PC-9 (cell line): ENCODE measurements at regions of chr6 and their contacts with region 1.

Region 1: GRCh38 chr6:79544939-79545450 is 7.8 kb upstream of the LCA5 start:
- DNase-seq: peak; percentile 79 to 94
- H3K4me3 ChIP-seq: no peak overlapping the region
- H3K27ac ChIP-seq: peak overlapping the region; percentile 64
- H3K4me1 ChIP-seq: peaks cover 19% of the 10 kb centered on the region
- H3K27me3 ChIP-seq: no peaks in the 10 kb centered on the region
- CTCF ChIP-seq: no peak; the same call in 1 of the 2 replicates

Region 2: GRCh38 chr6:79557673-79558467 is 12.9 kb after region 1 on chr6:
- CTCF ChIA-PET with region 1: no interaction called
- POLR2A ChIA-PET with region 1: no interaction called
- intact Hi-C with region 1: no loop called
- DNase-seq: no peak
- H3K4me3 ChIP-seq: no peak overlapping the region
- H3K27ac ChIP-seq: no peak overlapping the region
- H3K4me1 ChIP-seq: no peaks in the 10 kb centered on the region
- H3K27me3 ChIP-seq: no peaks in the 10 kb centered on the region
- CTCF ChIP-seq: no peak

Region 3: GRCh38 chr6:79586548-79586947 is 41.6 kb after region 1 on chr6:
- CTCF ChIA-PET with region 1: no interaction called
- POLR2A ChIA-PET with region 1: no interaction called
- intact Hi-C with region 1: no loop called
- DNase-seq: no peak
- H3K4me3 ChIP-seq: no peak overlapping the region
- H3K27ac ChIP-seq: no peak overlapping the region
- H3K4me1 ChIP-seq: no peaks in the 10 kb centered on the region
- H3K27me3 ChIP-seq: no peaks in the 10 kb centered on the region
- CTCF ChIP-seq: peak; percentile 45

Region 4: GRCh38 chr6:79630883-79631692 is 86.1 kb after region 1 on chr6 and contains the start of gene SH3BGRL2:
- CTCF ChIA-PET with region 1: no interaction called
- POLR2A ChIA-PET with region 1: interaction called, 4 read pairs
- intact Hi-C with region 1: loop called (anchors 2 kb)
- DNase-seq: peak; percentile 37 to 75
- H3K4me3 ChIP-seq: peak within 1 kb of the TSS; percentile 90
- H3K27ac ChIP-seq: peak within 1 kb of the TSS; percentile 19; the same call in 1 of the 2 replicates
- H3K4me1 ChIP-seq: peaks cover 31% of the 10 kb centered on the region
- H3K27me3 ChIP-seq: no peaks in the 10 kb centered on the region
- CTCF ChIP-seq: no peak
- total RNA-seq, gene SH3BGRL2: 24.2 and 27.4 TPM in 2 replicates